Colonic mucosa (tissue), 4 donors: ENCODE measurements at regions of chr1 and their contacts with region 1.

Region 1: DNA sequence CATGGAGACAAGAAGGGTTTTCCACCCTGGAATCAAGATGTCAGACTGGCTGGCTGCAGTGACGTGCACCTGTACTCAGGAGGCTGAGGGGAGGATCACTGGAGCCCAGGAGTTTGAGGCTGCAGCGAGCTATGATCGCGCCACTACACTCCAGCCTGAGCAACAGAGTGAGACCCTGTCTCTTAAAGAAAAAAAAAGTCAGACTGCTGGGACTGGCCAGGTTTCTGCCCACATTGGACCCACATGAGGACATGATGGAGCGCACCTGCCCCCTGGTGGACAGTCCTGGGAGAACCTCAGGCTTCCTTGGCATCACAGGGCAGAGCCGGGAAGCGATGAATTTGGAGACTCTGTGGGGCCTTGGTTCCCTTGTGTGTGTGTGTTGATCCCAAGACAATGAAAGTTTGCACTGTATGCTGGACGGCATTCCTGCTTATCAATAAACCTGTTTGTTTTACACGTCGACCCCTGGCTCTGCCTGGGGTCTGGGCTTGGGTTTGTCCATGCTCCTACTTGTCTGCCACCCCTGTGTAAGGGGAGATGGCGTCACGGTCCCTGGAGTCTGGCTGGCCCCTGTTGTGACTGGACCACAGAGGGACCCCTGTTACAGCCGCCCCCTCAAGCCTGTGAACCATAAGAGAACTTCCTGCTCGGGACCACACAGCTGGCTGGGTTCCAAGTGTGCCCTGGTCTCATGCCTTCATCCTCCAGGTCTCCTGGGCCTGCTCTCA is 20.9 kb upstream of the VPS13D start:
- DNase-seq: peak; percentile 93
- H3K4me3 ChIP-seq: no peak overlapping the region
- H3K27ac ChIP-seq: no peak overlapping the region
- H3K4me1 ChIP-seq: no peaks in the 10 kb centered on the region
- H3K27me3 ChIP-seq: no peaks in the 10 kb centered on the region
- CTCF ChIP-seq: peak; percentile 93

Region 2: DNA sequence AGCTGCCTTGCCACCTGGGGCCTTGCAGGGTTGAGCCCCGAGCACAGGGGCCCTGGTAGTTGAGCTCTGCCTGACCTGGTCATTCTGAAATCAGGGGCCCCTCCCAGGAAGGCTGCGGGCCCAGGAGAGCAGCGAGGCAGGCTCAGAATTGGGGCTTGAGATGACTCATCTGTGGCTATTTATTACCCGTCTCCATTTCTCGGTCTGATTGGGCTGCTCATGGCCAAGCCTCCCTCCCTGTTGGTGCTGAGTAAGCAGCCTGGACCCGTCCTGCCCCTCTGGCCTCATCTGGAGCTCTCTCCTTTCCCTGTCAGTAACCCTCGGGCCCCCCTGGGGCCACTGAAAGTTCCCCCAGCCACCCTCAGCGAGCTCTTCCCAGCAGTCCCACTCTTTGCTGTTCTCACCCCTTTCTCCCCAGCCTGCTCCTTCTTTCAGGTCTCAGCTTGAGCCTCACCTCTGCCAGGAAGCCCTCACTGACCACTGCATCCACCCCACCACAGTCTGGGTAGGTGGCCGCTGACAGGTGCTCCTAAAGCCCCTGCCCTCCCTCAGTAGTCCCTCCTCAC is 156.8 kb before region 1 on chr1:
- intact Hi-C with region 1: no loop called
- DNase-seq: peak; percentile 29
- H3K4me3 ChIP-seq: no peak overlapping the region
- H3K27ac ChIP-seq: no peak overlapping the region
- H3K4me1 ChIP-seq: no peaks in the 10 kb centered on the region
- H3K27me3 ChIP-seq: no peaks in the 10 kb centered on the region
- CTCF ChIP-seq: no peak

Region 3: DNA sequence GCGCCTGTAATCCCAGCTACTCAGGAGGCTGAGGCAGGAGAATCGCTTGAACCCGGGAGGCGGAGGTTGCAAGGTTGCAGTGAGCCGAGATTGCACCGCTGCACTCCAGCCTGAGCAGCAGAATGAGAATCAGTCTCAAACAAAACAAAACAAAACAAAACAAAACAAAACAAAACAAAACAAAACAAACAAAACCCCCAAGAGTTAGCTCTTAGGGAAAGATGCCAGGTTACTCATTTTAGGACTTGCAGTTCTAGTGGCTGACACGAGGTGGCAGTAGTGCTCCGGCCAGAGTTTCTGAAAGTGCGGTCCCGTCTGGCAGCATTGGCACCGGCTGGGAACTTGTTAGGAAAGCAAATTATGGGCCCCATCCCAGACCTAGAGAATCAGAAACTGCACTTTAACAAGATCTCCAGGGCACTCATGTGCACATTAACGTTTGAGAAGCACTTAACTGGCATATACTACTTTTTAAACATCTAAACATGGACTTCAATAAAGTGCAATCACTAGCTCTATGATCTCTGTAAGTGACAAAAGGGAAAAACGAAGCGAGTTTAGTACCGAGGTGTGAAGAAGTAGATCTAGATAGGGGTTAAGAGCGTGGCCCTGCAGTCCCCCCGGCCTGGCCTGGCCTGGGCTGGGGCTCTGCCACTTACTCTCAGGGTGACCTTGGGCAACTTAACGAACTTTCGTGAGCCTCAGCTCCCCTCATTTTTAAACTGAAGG is 84.1 kb before region 1 on chr1:
- intact Hi-C with region 1: loop called (anchors 2 kb)
- DNase-seq: peak; percentile 81
- H3K4me3 ChIP-seq: no peak overlapping the region
- H3K27ac ChIP-seq: no peak overlapping the region
- H3K4me1 ChIP-seq: no peaks in the 10 kb centered on the region
- H3K27me3 ChIP-seq: no peaks in the 10 kb centered on the region
- CTCF ChIP-seq: peak; percentile 94

Region 4: DNA sequence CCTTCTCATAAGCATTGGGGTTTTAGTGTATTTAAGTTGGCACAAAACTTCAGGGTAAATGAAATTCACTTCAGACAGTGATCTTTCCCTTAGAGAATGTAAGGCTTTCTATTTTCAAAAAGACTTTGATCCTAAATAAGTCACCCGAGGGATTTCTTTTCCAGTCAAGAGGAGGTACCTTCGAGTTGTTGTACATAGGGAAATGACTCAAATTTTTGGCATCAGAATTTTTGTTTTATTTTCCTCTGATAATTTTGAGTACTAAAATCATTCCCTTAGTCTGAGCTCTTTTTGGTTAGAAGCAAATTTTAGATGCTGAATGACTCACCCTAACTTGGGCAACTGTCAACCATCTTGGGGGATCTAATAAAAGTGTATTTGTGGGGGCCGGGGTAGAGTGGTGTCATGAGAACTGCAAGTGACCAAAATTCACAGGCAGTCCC is 215.2 kb after region 1 on chr1:
- intact Hi-C with region 1: no loop called
- DNase-seq: no peak
- H3K4me3 ChIP-seq: no peak overlapping the region
- H3K27ac ChIP-seq: no peak overlapping the region
- H3K4me1 ChIP-seq: no peaks in the 10 kb centered on the region
- H3K27me3 ChIP-seq: no peaks in the 10 kb centered on the region
- CTCF ChIP-seq: no peak